ENCODE measurements at regions of chr19 and their contacts with region 1.

Region 1: DNA sequence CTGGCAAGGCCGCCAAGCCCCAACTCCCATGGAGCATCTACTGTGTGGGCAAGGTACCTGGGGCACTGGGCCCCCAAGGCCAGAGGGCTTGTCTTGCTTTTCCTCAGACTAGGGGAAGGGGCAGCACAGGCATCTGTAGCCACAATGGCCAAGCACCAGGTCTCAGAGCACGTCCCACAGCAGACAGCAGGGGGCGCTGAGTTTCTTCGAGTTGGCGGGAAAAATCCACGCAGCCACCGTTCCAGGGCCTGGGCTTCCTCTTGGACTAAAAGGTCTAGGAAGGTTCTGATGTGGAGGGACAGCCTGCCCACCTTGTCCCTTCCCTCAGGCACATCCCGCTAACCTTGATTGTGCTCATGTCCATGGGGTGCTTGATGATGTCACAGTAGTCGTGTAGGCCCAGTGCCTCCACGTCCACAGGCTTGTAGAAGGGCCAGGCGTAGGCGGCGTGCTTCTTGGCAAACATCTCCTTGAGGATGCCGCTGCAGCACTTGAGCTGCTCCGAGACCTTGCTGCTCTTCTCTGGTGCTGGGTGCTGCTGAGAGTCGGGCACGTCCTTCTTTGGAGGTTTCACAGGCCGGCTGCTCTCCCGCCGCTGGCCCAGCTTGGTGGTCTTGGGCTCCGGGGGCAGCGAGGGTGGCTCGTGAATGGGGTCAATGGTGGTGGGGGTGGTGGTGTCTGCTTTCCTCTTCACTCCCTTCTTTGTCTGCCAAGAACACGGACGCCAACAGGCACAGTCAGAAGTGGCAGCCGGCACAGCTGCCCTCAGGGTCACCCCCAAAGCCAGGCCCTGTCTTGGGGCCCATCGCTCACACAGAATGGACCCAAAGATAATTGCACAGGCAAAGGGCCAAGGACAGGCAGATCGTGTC is 32.0 kb upstream of the EPHX3 start:
- DNase-seq: peak; percentile 85
- H3K4me3 ChIP-seq: no peak overlapping the region
- H3K27ac ChIP-seq: peak overlapping the region in 1 of 2 experiments; percentile 81; a peak in 1 of 4 replicates
- H3K4me1 ChIP-seq: peaks cover 12 to 43% of the 10 kb centered on the region in 2 experiments
- H3K27me3 ChIP-seq: no peaks in the 10 kb centered on the region
- CTCF ChIP-seq: peak; percentile 85
- EP300 ChIP-seq: no peak
- RAD21 ChIP-seq: peak; percentile 85

Region 2: DNA sequence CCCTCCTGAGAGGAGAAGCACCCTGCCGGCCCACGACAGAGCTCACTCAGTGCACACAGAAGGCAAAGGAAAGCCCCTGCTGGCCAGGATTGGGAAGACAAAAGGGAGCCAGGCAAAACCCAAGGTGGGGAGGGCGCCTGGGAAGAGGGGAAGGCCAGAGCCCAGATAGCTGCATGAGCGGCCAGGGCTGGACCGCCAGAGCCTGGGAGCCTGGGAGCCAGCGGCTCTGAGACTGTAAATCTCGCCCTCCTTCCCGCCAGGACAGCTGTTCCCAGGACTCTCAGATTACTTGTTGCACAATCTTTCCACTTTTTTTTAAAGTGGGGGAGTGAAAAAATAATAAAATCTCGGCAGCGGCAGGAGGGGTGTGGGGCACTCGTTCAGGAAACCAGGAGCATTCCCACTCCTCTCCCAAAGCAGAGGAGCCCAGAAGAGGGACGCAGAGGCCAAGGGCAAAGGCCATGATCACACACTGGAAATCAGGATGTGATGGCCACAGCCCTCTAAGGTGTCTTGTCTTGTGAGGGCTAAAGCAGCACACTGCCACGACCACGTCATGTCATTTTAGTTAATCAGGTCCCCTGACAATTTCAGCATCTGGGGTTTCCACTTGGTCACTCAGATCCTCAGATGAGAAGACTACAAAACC is 12.4 kb before region 1 on chr19:
- CTCF ChIA-PET with region 1: interaction called, 26 read pairs
- POLR2A ChIA-PET with region 1: interaction called, 4 read pairs
- DNase-seq: peak; percentile 77
- H3K4me3 ChIP-seq: 0 out of 4 replicates have a peak overlapping the region, but pooled peaks of 1 of the 2 experiments have one; percentile 4
- H3K27ac ChIP-seq: peak overlapping the region; percentile 43 to 97
- H3K4me1 ChIP-seq: peaks cover 17 to 47% of the 10 kb centered on the region in 2 experiments
- H3K27me3 ChIP-seq: no peaks in the 10 kb centered on the region
- CTCF ChIP-seq: peak; percentile 60
- EP300 ChIP-seq: no peak
- RAD21 ChIP-seq: peak; percentile 43

Region 3: DNA sequence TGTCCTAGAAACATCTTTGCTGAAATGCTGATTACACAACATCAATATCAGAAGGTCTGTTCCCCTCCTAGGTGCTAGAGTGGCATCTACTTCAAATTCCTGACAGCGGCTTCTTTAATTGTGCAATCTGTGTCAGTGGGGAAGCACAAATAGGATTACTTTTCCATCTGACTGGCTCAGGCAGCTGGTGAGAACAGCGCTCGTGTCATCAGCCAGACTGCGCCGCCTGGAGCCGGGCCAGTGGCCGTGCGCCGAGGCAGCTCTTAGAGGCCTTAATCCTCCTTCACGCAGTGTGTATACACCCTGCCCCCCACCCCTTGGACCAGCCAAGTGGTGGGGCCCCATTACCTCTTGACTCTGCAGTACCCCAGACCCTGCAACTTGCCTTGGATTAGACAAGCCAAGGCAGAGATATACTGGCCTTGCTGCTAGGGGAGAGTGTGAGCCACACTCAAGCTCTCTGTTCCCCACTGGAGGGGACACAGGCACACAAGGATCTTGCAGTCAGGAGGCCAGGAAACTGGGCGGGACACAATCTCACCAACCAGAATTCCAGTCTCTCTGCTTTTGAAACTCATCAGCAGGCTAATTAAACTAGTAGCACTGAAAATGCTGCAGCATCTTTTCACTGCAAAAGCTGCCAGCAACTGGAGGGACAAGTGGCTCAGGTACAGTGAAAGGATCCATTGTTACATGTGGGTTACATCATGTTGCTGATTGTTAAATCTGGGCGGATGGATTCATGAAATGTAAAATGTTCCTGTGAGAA is 16.8 kb after region 1 on chr19:
- CTCF ChIA-PET with region 1: interaction called, 30 read pairs
- POLR2A ChIA-PET with region 1: interaction called, 3 read pairs
- DNase-seq: peak; percentile 70
- H3K4me3 ChIP-seq: no peak overlapping the region
- H3K27ac ChIP-seq: peak overlapping the region; percentile 36 to 86; a peak in 3 of 4 replicates
- H3K4me1 ChIP-seq: peaks cover 55 to 78% of the 10 kb centered on the region in 2 experiments
- H3K27me3 ChIP-seq: no peaks in the 10 kb centered on the region
- CTCF ChIP-seq: peak; percentile 43
- EP300 ChIP-seq: peak in 1 of 2 experiments; percentile 48; a peak in 2 of 4 replicates
- RAD21 ChIP-seq: peak; percentile 64

Region 4: GRCh38 chr19:15318241-15318691 is 54.0 kb after region 1 on chr19:
- CTCF ChIA-PET with region 1: no interaction called
- POLR2A ChIA-PET with region 1: no interaction called
- DNase-seq: no peak
- H3K4me3 ChIP-seq: no peak overlapping the region
- H3K27ac ChIP-seq: peak overlapping the region in 1 of 2 experiments; percentile 66; a peak in 2 of 4 replicates
- H3K4me1 ChIP-seq: peaks cover 28 to 38% of the 10 kb centered on the region in 2 experiments; a peak in 3 of 4 replicates
- H3K27me3 ChIP-seq: no peaks in the 10 kb centered on the region
- CTCF ChIP-seq: no peak
- EP300 ChIP-seq: no peak
- RAD21 ChIP-seq: no peak

Region 5: GRCh38 chr19:15437355-15438137 is 173.2 kb after region 1 on chr19:
- CTCF ChIA-PET with region 1: no interaction called
- POLR2A ChIA-PET with region 1: no interaction called
- DNase-seq: no peak
- H3K4me3 ChIP-seq: no peak overlapping the region
- H3K27ac ChIP-seq: no peak overlapping the region
- H3K4me1 ChIP-seq: peaks cover 0 to 5% of the 10 kb centered on the region in 2 experiments; a peak in 1 of 4 replicates
- H3K27me3 ChIP-seq: no peaks in the 10 kb centered on the region
- CTCF ChIP-seq: no peak
- EP300 ChIP-seq: no peak
- RAD21 ChIP-seq: no peak

Measured in SK-N-SH (cell line).